Tibial artery (tissue), 4 donors: ENCODE measurements at regions of chr4 and their contacts with region 1.

Region 1: DNA sequence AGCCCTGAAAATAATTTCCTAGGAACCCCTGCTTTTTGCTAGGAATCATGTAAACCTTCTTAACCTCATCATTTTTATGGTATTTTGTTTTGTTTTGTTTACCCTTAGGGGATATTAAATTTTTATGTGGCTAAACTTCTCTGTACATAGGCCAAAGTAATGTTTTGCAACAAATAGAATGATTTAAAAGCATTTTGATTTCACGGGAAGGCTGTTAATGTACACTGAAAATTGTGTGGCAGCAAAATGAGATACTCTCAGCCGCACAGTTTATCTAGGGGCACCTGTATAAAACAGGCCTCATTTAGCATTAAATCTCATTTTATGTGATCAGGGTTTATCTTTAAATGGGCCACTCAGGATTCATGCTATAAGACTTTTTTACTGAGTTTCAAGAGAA is 175.0 kb downstream of the ANTXR2 start:
- DNase-seq: no peak
- H3K4me3 ChIP-seq: no peak overlapping the region
- H3K27ac ChIP-seq: no peak overlapping the region
- H3K4me1 ChIP-seq: no peaks in the 10 kb centered on the region
- H3K27me3 ChIP-seq: no peaks in the 10 kb centered on the region
- CTCF ChIP-seq: no peak

Region 2: GRCh38 chr4:79848329-79848728 is 49.7 kb before region 1 on chr4:
- intact Hi-C with region 1: loop called (anchors 2 kb)
- DNase-seq: no peak
- H3K4me3 ChIP-seq: no peak overlapping the region
- H3K27ac ChIP-seq: no peak overlapping the region
- H3K4me1 ChIP-seq: no peaks in the 10 kb centered on the region
- H3K27me3 ChIP-seq: no peaks in the 10 kb centered on the region
- CTCF ChIP-seq: no peak